GM12878 (cell line): ENCODE measurements at regions of chr2 and their contacts with region 1.

Region 1: DNA sequence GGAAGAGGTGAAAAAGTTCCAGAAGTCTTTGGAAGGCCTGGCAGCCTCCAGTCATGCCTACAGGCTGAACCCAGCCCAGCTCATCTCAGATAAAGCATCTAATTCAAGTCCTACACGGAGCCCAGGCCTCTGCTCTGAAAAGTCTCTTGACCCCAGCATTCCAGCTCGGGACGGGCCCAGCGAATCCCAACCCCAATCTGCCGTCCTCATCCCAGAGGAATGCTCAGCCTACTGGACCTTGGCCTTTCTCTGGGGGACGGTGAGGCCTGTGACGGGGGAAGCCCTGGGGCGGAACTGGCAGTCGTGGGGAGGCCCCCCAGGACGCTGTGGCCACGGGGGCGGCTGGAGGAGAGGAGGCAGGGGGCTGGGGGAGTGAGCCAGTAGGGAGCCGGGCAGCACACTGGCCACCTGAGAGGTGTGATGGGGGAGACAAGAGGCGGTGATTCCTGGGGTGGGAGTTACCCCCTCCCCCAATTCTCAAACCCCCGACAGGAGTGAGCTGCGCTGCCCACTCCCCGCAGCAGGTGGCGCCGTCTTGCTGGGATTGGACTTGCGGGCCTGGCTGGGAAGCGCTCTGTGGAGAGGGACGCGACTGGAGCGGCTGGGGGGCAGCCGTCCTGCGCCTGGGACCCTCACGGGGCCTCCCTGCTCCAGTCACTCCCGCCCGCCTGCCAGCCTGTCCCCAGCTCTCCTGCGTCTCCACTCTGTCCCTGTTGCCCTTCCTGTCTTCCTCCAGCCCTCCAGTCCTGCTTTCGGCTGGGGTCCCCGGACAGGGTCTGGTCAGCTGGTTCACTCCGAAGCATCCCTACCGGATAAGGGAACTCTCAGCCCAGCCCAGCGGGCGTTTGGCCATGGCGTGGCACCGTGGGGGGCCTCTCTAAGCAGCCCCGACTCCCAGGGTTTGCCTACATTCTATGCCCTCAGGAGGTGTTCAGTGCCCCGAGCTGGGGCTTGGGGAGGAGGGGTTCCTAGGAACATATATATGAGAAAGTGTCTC is 182.6 kb upstream of the HAAO start:
- DNase-seq: no peak
- ATAC-seq: peak; percentile 67
- H3K4me3 ChIP-seq: no peak overlapping the region
- H3K27ac ChIP-seq: no peak overlapping the region
- H3K4me1 ChIP-seq: peaks cover 14% of the 10 kb centered on the region
- H3K27me3 ChIP-seq: peaks cover 0 to 1% of the 10 kb centered on the region in 2 experiments; a peak in 1 of 4 replicates
- CTCF ChIP-seq: peak; percentile 56 to 88 (median 83)
- EP300 ChIP-seq: no peak
- POLR2A ChIP-seq: no peak
- RAD21 ChIP-seq: peak; percentile 77

Region 2: DNA sequence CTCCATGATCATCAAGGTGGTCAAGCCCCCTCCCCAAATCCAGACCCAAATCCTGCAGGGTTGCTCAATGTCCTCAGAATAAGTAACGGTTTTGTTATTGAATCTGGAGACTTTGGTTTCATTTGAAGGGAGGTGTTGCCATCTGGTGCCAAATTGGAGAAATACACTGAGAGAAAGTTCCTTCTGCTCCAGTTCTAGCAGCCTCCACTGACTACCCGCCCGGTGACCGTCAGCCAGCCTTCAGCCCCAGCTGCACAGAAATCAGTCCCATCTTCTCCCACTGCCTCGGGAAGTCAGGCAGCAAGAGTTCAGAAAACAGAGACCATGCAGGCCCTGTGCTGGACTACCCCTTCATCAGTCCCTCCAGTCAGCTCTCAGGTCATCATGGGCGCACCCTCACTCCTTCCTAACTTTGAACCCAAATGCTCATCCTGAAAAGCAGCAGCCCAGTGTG is 888.5 kb before region 1 on chr2:
- CTCF ChIA-PET with region 1: no interaction called
- POLR2A ChIA-PET with region 1: no interaction called
- RAD21 ChIA-PET with region 1: no interaction called
- SMC1A ChIA-PET with region 1: no interaction called
- in situ Hi-C with region 1: no loop called
- intact Hi-C with region 1: no loop called
- DNase-seq: no peak
- ATAC-seq: peak; percentile 73
- H3K4me3 ChIP-seq: no peak overlapping the region
- H3K27ac ChIP-seq: no peak overlapping the region
- H3K4me1 ChIP-seq: no peaks in the 10 kb centered on the region
- H3K27me3 ChIP-seq: 0 out of 4 replicates have a peak, but pooled peaks cover 0 to 3% of the 10 kb centered on the region in 2 experiments
- CTCF ChIP-seq: peak; percentile 61 to 83 (median 73); a peak in 4 of 6 replicates
- EP300 ChIP-seq: no peak
- POLR2A ChIP-seq: no peak
- RAD21 ChIP-seq: peak; percentile 96

Region 3: GRCh38 chr2:42296226-42296625 is 678.8 kb before region 1 on chr2:
- CTCF ChIA-PET with region 1: no interaction called
- POLR2A ChIA-PET with region 1: no interaction called
- RAD21 ChIA-PET with region 1: no interaction called
- SMC1A ChIA-PET with region 1: no interaction called
- in situ Hi-C with region 1: no loop called
- intact Hi-C with region 1: no loop called
- DNase-seq: peak; percentile 34
- ATAC-seq: peak; percentile 71
- H3K4me3 ChIP-seq: no peak overlapping the region
- H3K27ac ChIP-seq: peak overlapping the region; percentile 31; the same call in 1 of the 2 replicates
- H3K4me1 ChIP-seq: peaks cover 7% of the 10 kb centered on the region; the same call in 1 of the 2 replicates
- H3K27me3 ChIP-seq: no peaks in the 10 kb centered on the region
- CTCF ChIP-seq: no peak
- EP300 ChIP-seq: no peak
- POLR2A ChIP-seq: no peak
- RAD21 ChIP-seq: no peak

Region 4: GRCh38 chr2:42964439-42965083 is 10.5 kb before region 1 on chr2:
- CTCF ChIA-PET with region 1: interaction called, 6 read pairs
- POLR2A ChIA-PET with region 1: interaction called, 3 read pairs
- RAD21 ChIA-PET with region 1: interaction called, 12 read pairs
- SMC1A ChIA-PET with region 1: interaction called, 16 read pairs
- in situ Hi-C with region 1: no loop called
- intact Hi-C with region 1: no loop called
- DNase-seq: no peak
- ATAC-seq: no peak
- H3K4me3 ChIP-seq: no peak overlapping the region
- H3K27ac ChIP-seq: no peak overlapping the region
- H3K4me1 ChIP-seq: peaks cover 10% of the 10 kb centered on the region
- H3K27me3 ChIP-seq: peaks cover 0 to 2% of the 10 kb centered on the region in 2 experiments; a peak in 2 of 4 replicates
- CTCF ChIP-seq: no peak
- EP300 ChIP-seq: no peak
- POLR2A ChIP-seq: no peak
- RAD21 ChIP-seq: no peak

Region 5: GRCh38 chr2:43131024-43131889 is 156.2 kb after region 1 on chr2:
- CTCF ChIA-PET with region 1: interaction called, 12 read pairs
- POLR2A ChIA-PET with region 1: no interaction called
- RAD21 ChIA-PET with region 1: no interaction called
- SMC1A ChIA-PET with region 1: interaction called, 3 read pairs
- in situ Hi-C with region 1: no loop called
- intact Hi-C with region 1: loop called (anchors 2 kb)
- DNase-seq: no peak
- ATAC-seq: peak; percentile 81
- H3K4me3 ChIP-seq: no peak overlapping the region
- H3K27ac ChIP-seq: no peak overlapping the region
- H3K4me1 ChIP-seq: peaks cover 43% of the 10 kb centered on the region
- H3K27me3 ChIP-seq: no peaks in the 10 kb centered on the region
- CTCF ChIP-seq: peak; percentile 61 to 82 (median 62); a peak in 5 of 6 replicates
- EP300 ChIP-seq: no peak; a peak in 1 of 4 replicates
- POLR2A ChIP-seq: no peak
- RAD21 ChIP-seq: peak; percentile 78

Region 6: GRCh38 chr2:43408407-43409160 is 433.6 kb after region 1 on chr2:
- CTCF ChIA-PET with region 1: no interaction called
- POLR2A ChIA-PET with region 1: no interaction called
- RAD21 ChIA-PET with region 1: no interaction called
- SMC1A ChIA-PET with region 1: interaction called, 3 read pairs
- in situ Hi-C with region 1: no loop called
- intact Hi-C with region 1: loop called (anchors 10 kb)
- DNase-seq: peak; percentile 76
- ATAC-seq: peak; percentile 86
- H3K4me3 ChIP-seq: no peak overlapping the region
- H3K27ac ChIP-seq: peak overlapping the region; percentile 94
- H3K4me1 ChIP-seq: peaks cover 50% of the 10 kb centered on the region
- H3K27me3 ChIP-seq: no peaks in the 10 kb centered on the region
- CTCF ChIP-seq: no peak
- EP300 ChIP-seq: peak; percentile 71 to 87; a peak in 2 of 4 replicates
- POLR2A ChIP-seq: no peak
- RAD21 ChIP-seq: no peak